Left cardiac atrium (tissue), 4 donors: ENCODE measurements at regions of chr5 and their contacts with region 1.

Region 1: DNA sequence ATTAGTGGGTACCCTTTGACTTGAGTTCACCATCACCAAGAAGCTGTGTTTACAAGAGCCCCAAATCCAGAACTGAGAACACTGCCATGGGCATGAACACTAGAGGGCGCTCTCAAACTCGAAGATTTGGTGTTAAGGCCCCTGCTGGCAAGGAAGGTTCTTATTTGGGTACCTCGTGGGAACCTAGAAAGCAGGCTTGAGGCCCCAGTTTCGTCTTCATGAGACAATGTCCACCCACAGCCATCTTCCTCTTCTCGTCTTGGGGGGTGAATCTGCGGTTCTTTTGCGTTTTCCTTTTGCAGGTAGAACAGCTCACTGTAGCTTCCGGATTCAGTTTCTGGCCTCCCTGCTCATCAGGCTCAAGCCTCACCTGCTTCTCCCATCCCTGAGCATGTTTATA is 184.0 kb downstream of the SEMA5A start:
- DNase-seq: peak; percentile 36
- ATAC-seq: peak; percentile 48 to 65

Region 2: DNA sequence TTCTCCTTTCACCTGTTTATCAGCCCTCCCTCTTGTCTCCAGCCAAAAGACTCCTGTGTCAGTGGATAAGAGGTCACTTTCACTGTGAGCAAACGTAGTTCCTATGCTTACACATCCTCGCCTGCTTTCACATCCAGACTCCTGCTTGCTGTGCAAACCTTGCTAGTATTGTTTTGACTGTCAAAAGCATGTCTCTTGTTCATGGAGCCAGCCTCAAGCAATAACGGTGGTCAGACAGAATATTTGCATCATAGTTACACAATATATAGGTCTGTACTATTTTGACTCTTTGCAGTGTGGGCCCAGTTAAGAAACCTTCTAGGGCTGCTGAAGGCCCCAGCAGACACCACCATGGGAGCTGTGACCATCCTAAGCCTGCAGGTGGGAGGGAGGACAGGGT is 236.0 kb before region 1 on chr5:
- intact Hi-C with region 1: no loop called
- DNase-seq: no peak
- ATAC-seq: no peak

Region 3: GRCh38 chr5:9498541-9499497 is 137.0 kb after region 1 on chr5:
- intact Hi-C with region 1: loop called in 1 of 2 experiments (anchors 2 kb)
- DNase-seq: no peak
- ATAC-seq: no peak

Region 4: DNA sequence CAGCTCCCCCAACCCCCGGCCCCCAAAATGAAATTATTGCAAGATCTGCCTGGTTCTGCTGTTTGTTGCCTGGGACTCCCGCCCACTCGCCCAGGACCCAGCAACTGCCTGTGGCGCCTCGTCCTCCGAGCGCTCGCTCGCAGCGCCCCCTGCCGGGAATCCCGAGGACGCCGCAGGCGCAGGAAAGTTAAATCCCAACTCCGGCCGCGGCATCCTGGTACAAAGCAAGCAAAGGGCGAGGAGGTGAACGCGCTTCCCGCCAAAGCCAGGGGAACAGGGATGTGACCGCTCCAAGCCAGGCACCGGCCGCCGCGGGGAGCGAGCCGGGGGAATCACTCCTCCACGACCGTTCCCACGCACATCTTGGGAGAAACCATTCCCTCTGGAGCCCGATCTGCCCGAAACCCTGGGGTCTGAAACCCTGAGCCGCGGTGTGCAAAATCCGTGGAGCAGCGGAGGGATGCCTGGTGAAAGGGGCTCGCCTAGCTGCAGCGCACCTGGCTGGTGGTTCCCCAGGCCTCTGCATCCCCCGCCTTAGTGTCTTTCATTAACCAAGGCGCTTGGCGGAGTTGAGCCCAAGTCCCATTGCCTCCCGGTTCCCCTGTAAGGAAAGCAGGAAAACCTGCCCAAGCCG is 182.8 kb after region 1 on chr5:
- intact Hi-C with region 1: loop called (anchors 2 to 10 kb)
- DNase-seq: peak; percentile 82
- ATAC-seq: peak; percentile 64 to 70